ENCODE measurements at regions of chr20 and their contacts with region 1.

Region 1: GRCh38 chr20:22333885-22334545 is 250.4 kb downstream of the FOXA2 start:
- DNase-seq: peak; percentile 53

Region 2: GRCh38 chr20:21395666-21396598 is 938.1 kb before region 1 on chr20:
- in situ Hi-C with region 1: no loop called
- DNase-seq: no peak

Region 3: DNA sequence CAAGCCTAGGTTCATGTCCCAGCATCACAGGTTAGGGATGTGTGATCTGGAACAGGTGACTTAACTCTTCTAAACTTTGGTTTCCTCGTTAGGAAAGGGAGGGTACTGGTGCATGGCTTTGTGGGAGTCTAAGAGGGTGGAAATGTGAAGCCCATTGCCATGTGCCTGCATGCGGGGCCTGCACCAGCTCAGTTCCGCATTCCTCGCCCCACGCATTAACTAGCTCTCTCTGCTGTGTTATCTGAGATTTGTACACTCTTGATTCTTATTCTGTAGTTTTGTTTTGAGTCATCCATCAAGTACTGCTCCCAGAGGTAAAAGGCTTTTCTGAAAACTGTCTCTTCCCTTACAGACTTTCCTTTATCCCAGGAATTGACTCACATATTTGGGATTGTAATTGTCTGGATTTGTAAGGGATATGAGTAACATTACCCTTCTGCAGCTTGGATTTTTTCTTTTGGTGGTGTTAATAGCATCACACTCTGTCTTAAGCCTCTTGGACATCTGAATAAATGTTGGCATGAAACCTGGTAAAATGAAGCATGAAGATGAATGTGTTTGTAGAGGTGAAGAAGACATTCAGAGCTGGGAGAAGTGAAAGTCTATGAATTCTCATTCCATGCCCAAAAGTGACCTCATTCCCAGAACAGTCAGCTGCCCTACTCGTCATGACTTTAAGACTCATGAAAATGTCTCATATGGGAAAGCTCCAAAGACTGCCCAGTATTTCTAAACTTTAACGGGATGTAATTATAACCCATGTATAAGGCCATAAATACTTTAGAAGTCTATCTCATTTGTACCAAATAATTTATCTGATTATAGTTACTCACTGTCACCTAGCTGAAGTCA is 106.9 kb before region 1 on chr20:
- in situ Hi-C with region 1: no loop called
- DNase-seq: no peak

Region 4: GRCh38 chr20:22264917-22265316 is 69.1 kb before region 1 on chr20:
- in situ Hi-C with region 1: no loop called
- DNase-seq: no peak

Region 5: GRCh38 chr20:22586645-22587310 is 252.8 kb after region 1 on chr20:
- in situ Hi-C with region 1: loop called (anchors 25 kb)
- DNase-seq: peak; percentile 41

Measured in Caki2 (cell line).